ENCODE measurements at regions of chr1 and their contacts with region 1.

Region 1: GRCh38 chr1:16078925-16079656 is 5.6 kb upstream of the FAM131C start:
- DNase-seq: peak; percentile 66 to 81 (median 77)
- H3K4me3 ChIP-seq: peak overlapping the region in 1 of 7 experiments; percentile 45
- H3K27ac ChIP-seq: no peak overlapping the region
- H3K4me1 ChIP-seq: peaks cover 0 to 5% (median 1%) of the 10 kb centered on the region in 4 experiments
- H3K27me3 ChIP-seq: peaks cover 0 to 4% (median 3%) of the 10 kb centered on the region in 5 experiments

Region 2: DNA sequence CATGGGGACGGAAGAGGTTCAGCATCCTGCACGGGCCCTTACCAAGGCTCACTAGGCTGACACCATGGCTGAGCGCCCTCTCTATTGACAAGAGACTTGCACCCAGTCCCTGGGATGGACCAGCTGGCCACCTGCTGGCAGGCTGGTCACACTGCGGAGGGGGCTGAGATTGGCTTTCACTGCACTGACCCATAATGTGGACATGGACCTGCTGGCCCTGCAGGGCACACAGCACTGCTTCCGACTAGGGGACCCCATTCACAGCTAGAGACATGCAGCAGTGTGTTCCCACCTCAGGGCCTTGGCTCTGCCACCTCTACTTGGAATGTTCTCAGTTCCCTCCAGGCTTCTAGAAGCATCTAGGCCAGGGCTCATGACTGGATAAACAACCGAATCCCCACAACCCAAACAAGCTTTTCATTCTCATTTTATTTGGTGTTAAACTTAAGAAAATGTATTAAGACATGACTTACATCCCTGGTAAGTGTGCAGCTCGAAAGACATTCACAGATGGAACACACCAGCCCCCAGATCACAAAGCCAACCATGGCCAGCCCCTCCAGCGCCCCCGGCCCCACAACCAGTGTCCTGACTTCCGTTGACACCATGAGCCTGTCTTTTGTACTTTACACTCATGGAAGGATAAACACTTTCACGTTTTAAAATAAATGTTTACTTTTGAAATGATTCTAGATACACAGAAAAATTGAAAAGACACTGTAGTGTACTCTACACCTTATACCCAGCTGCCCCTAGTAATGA is 84.3 kb before region 1 on chr1:
- CTCF ChIA-PET with region 1: no interaction called
- POLR2A ChIA-PET with region 1: no interaction called
- DNase-seq: peak in 2 of 3 donors; percentile 46 to 54
- H3K4me3 ChIP-seq: no peak overlapping the region
- H3K27ac ChIP-seq: no peak overlapping the region
- H3K4me1 ChIP-seq: no peaks in the 10 kb centered on the region
- H3K27me3 ChIP-seq: peaks cover 0 to 2% (median 0%) of the 10 kb centered on the region in 5 experiments

Region 3: DNA sequence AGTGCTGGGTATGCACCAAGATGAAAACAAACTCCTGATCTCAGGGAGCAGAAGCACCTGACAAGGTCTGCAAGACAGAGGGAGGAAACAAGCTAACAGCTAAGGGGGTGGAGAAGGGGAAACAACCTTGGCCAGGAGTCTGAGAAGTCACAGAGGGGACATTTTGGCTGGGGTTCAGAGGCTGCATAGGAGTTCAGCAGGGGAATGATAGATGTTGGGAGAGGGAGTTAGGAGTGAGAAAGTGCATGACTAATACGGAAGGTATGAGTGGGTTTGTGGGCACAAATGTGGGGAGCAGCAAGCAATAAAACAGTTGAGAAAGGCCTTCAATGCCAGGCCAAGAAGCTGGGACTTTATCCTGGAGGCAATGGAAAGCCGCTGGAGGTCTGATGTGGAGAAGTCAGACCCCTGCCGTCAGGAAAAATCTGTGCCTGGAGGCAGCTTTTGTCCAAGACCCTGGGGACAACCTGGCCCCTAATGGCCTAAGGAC is 60.4 kb after region 1 on chr1:
- CTCF ChIA-PET with region 1: interaction called, 12 read pairs
- POLR2A ChIA-PET with region 1: no interaction called
- DNase-seq: no peak
- H3K4me3 ChIP-seq: no peak overlapping the region
- H3K27ac ChIP-seq: no peak overlapping the region
- H3K4me1 ChIP-seq: peaks cover 0 to 23% (median 17%) of the 10 kb centered on the region in 4 experiments
- H3K27me3 ChIP-seq: peaks cover 0 to 2% (median 0%) of the 10 kb centered on the region in 5 experiments

Region 4: DNA sequence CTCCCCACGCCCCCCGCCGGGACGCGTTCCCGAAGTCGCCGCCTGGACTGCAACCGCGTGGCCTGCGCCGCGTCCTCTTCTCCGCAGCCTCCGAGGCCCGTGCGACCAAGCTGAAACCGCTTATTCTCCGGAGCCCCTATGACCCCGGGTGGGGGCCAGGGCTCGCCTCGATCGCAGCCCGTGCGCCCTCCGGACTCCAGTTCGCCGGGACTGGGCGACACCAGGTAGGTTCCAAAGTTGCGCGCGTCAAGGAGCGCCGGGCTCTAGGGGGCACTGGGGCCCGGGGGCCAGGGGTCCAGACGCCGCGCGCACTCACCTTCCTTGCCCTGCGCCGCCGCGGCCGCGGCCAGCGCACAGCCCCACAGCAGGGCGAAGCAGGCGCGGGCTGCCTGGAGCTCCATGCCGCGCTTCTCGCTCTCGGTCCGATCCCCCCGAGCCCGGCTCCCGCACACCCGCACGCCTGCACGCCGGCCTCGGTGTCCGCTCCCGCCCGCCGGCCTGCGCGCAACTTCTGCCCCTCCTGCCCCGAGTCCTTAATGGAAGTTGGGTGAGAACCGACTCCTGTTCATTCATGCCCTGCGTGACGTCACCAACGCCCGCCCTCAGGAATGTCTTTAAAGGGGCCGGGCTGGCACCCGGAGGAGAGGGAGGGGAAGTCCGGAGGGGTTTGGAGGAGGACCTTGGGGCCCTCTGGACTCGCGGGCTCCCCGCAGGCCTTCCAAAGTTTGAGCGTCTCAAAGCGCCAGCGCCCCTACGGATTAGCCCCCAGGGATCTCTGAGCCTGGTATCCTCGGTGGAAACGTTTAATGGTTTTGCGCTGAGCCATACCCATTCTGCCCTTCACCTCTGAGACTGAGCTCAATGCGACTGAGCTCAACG is 76.7 kb after region 1 on chr1 and contains the start of gene EPHA2:
- CTCF ChIA-PET with region 1: interaction called, 104 read pairs
- POLR2A ChIA-PET with region 1: interaction called, 3 read pairs
- DNase-seq: peak in 2 of 3 donors; percentile 42 to 55
- H3K4me3 ChIP-seq: peak within 1 kb of the TSS in 6 of 7 experiments; percentile 23 to 71 (median 55)
- H3K27ac ChIP-seq: no peak within 1 kb of the TSS
- H3K4me1 ChIP-seq: peaks cover 3 to 50% (median 39%) of the 10 kb centered on the region in 4 experiments
- H3K27me3 ChIP-seq: peaks cover 0 to 50% (median 18%) of the 10 kb centered on the region in 5 experiments

Region 5: GRCh38 chr1:16187748-16188401 is 108.8 kb after region 1 on chr1:
- CTCF ChIA-PET with region 1: interaction called, 356 read pairs
- POLR2A ChIA-PET with region 1: interaction called, 6 read pairs
- DNase-seq: peak; percentile 61 to 78 (median 70)
- H3K4me3 ChIP-seq: no peak overlapping the region
- H3K27ac ChIP-seq: no peak overlapping the region
- H3K4me1 ChIP-seq: no peaks in the 10 kb centered on the region
- H3K27me3 ChIP-seq: peaks cover 0 to 6% (median 0%) of the 10 kb centered on the region in 5 experiments

Region 6: GRCh38 chr1:16243936-16244649 is 165.0 kb after region 1 on chr1:
- CTCF ChIA-PET with region 1: interaction called, 22 read pairs
- POLR2A ChIA-PET with region 1: no interaction called
- DNase-seq: peak; percentile 80 to 91 (median 86)
- H3K4me3 ChIP-seq: no peak overlapping the region
- H3K27ac ChIP-seq: no peak overlapping the region
- H3K4me1 ChIP-seq: peaks cover 17 to 33% (median 23%) of the 10 kb centered on the region in 4 experiments
- H3K27me3 ChIP-seq: no peaks in the 10 kb centered on the region